ENCODE measurements at regions of chr3 and their contacts with region 1.

Region 1: DNA sequence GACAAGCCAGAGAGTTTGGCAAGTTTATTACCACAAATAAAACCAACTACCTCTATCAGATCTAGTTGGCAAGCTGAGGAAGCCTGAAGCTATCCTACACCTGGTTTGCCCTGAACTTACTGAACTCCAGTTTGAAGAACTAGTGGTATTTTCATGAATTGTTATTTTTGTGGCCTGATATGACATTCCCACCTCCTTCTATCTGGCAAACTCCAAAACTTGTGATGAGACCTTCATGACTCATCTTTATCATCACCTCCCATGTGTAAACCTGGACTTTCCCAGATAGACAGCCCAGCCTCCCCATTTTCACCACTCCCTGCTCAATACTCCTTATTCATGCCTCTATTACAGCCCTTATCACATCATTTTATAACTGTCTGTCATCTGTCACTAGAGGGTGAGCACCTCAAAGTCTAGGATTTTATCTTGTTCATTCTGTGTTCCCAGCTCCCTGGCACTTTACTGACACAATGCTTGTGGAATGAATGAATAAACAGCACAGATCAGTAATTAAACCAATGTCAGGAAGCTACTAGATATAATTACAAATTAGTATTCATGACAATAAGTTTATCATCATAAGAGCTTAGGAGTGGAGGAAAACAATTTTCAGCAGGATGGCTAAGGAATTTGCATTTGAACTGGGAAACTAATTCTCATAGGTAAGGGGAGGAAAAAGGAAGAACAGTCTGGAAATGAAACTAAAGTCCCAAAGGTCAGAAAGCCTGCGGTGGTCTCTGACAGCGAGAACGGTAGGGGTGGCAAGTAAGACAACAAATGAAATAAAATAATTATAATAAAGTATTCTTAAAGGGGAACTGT is 13.2 kb upstream of the TRANK1 start:
- DNase-seq: peak in 1 of 2 donors; percentile 27
- ATAC-seq: peak; percentile 34 to 61 (median 38)
- H3K4me3 ChIP-seq: no peak overlapping the region
- H3K4me3 Mint-ChIP-seq: no peak overlapping the region
- H3K27ac ChIP-seq: no peak overlapping the region
- H3K27ac Mint-ChIP-seq: peak overlapping the region in 1 of 2 donors; percentile 80
- H3K4me1 ChIP-seq: no peaks in the 10 kb centered on the region
- H3K4me1 Mint-ChIP-seq: peaks cover 0 to 11% of the 10 kb centered on the region in 2 donors
- H3K27me3 ChIP-seq: no peaks in the 10 kb centered on the region
- H3K27me3 Mint-ChIP-seq: no peaks in the 10 kb centered on the region
- CTCF ChIP-seq: no peak

Region 2: DNA sequence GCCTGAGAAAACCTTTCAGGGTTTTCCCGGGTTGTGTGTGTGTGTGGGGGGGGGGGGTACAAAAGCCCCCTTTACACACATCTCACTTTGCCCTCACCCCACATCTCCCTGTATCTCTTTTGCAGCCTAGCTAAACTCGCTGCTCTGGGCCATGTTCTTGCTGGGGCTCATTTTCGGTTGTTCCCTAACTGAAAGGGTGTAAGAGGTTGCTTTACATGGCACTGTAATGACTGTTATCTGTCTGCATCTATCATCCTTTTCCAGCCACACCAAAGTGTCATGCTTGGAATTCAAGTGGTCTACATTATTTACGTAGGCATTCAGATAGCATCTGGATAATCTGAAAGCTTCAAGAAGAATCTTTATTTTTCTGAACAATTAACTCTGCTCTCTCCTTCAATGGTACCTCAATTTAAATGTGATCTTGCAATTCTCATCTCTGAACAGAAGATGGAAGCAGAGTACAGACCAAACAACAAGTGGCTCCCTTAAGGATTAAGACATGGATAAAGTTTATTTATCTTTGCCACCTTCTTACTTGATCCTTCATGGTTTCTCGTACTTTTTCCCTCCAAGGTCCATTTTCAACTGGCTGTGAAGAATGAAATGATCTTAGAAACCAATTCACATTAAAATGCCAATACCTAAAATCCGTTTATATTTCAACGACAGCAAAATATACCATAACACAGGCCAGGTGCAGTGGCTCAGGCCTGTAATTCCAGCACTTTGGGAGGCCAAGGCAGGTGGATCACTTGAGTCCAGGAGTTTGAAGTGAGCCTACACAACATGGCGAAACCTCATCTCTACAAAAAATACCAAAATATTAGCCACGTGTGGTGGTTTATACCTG is 228.6 kb before region 1 on chr3:
- intact Hi-C with region 1: loop called (anchors 1 kb)
- DNase-seq: peak in 1 of 2 donors; percentile 62
- ATAC-seq: peak; percentile 49 to 78 (median 57)
- H3K4me3 ChIP-seq: no peak overlapping the region
- H3K4me3 Mint-ChIP-seq: no peak overlapping the region
- H3K27ac ChIP-seq: no peak overlapping the region
- H3K27ac Mint-ChIP-seq: no peak overlapping the region
- H3K4me1 ChIP-seq: no peaks in the 10 kb centered on the region
- H3K4me1 Mint-ChIP-seq: no peaks in the 10 kb centered on the region
- H3K27me3 ChIP-seq: no peaks in the 10 kb centered on the region
- H3K27me3 Mint-ChIP-seq: peaks cover 0 to 22% of the 10 kb centered on the region in 2 donors
- CTCF ChIP-seq: peak; percentile 58

Region 3: DNA sequence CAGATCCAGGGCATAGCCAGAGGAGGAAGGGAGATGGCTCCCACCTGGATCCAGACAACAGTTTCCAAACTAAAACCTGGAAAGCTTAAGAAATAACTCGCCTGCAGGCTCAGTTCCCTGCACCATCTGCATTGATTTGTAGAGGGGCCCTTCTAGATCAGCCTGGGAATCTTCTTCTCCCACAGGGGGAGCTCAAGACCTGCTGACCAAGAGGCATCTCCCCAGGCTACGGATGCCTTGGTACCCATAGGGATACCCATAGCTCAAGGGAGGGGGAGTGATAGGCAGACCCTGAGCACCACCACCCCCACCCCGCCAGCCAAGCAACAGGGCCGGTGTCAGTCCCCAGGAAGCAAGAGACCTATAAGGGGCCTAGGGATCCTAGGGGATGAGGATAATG is 165.7 kb before region 1 on chr3:
- intact Hi-C with region 1: loop called (anchors 2 kb)
- DNase-seq: peak in 1 of 2 donors; percentile 44
- ATAC-seq: peak in 2 of 3 donors; percentile 36 to 49
- H3K4me3 ChIP-seq: no peak overlapping the region
- H3K4me3 Mint-ChIP-seq: no peak overlapping the region
- H3K27ac ChIP-seq: no peak overlapping the region
- H3K27ac Mint-ChIP-seq: no peak overlapping the region
- H3K4me1 ChIP-seq: no peaks in the 10 kb centered on the region
- H3K4me1 Mint-ChIP-seq: no peaks in the 10 kb centered on the region
- H3K27me3 ChIP-seq: no peaks in the 10 kb centered on the region
- H3K27me3 Mint-ChIP-seq: peaks cover 14 to 27% of the 10 kb centered on the region in 2 donors
- CTCF ChIP-seq: no peak

Region 4: GRCh38 chr3:36911990-36912804 is 45.9 kb before region 1 on chr3:
- intact Hi-C with region 1: loop called (anchors 2 kb)
- DNase-seq: peak in 1 of 2 donors; percentile 76
- ATAC-seq: peak; percentile 73 to 88 (median 76)
- H3K4me3 ChIP-seq: peak overlapping the region; percentile 6
- H3K4me3 Mint-ChIP-seq: peak overlapping the region; percentile 56
- H3K27ac ChIP-seq: peak overlapping the region; percentile 89
- H3K27ac Mint-ChIP-seq: peak overlapping the region; percentile 77 to 83
- H3K4me1 ChIP-seq: peaks cover 30% of the 10 kb centered on the region
- H3K4me1 Mint-ChIP-seq: peaks cover 29 to 37% of the 10 kb centered on the region in 2 donors
- H3K27me3 ChIP-seq: no peaks in the 10 kb centered on the region
- H3K27me3 Mint-ChIP-seq: no peaks in the 10 kb centered on the region
- CTCF ChIP-seq: no peak